ENCODE measurements at regions of chr16 and their contacts with region 1.

Region 1: GRCh38 chr16:31142109-31143010 is 6.8 kb upstream of the PRSS8 start:
- DNase-seq: peak; percentile 84
- H3K4me3 ChIP-seq: peak overlapping the region; percentile 57
- CTCF ChIP-seq: peak; percentile 99

Region 2: DNA sequence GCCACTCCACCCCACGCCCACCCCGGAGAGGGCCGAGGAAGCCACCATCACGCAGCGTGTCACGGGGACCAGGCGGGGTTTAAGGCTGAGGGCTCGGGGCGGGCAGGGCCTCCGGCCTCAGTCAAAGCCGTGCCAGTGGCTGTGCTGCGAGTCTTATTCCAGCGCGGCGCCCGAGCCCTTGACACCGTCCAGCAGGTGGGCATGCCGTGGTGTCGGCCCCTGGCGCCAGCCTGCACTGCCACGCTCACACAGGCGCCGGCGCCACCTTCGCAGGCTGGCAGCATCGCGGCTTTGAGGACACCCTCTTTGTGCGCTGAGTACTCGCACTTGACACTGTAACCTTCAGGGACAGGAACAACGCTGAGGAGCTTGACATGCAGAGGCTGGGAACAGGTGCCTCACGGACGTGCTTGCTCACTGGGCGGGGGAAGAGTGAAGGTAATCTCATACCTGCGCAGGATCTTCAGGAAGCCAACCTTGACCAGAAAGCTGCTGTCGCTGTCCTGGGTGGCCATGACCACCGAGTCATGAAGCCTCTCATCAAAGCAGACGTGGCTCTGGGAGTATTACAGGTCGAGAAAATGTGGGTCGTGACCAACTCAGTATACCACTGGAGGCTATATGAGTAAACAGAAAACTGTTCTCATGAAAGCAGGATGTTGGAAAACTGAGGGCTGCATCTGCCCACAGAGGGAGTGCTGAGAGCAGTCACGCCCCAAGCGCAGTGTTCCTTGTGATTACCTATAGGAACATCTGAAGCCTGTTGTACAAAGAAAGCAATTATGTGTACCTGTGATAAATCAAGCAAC is 321.2 kb before region 1 on chr16:
- CTCF ChIA-PET with region 1: no interaction called
- POLR2A ChIA-PET with region 1: no interaction called
- DNase-seq: no peak
- H3K4me3 ChIP-seq: no peak overlapping the region
- CTCF ChIP-seq: no peak

Region 3: DNA sequence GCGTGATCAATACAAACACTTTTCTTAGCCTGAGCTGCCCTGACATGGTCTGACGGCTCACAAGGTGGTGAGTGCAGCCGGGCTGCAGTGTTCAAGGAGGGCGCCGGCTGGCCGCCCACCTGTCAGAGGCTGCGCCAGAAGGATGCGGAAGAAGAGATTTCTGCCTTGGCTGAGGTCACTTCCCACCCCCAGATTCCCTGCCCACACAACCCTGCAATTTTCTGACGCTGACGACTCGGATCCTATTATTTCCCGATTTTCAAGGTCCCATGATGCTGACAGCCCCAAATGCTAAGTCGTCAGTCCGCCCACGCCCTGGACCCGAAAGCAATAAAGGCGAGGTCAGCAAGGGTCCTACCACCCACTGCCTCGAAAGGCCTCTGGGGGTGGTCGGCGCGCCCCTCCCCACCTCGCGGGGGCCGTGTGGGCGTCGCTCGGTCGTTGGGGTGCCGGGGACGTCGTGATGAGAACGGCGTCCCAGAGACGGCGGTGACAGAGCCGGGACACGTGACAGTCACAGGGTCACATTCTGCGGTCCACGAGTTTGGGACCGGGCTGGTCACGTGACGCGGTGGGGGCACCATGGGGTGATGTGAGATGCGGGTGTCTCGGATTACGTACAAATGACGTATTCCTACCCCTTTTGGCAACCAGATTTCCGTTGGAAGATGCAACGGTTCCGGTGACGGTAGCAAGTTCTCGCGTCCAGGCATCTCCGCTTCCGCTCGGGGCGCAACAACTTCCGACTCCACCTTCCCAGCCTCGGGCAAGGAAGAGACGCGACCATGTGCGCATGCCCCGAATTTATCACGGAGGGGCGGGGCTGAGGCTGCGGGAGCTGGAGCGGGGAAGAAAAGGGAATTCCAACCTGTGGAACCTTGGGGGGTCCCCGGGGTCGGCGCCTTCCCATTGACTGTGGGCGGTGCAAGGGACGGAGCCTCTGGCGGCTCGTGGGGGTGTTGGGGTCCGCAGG is 109.3 kb before region 1 on chr16 and contains the start of gene STX4:
- CTCF ChIA-PET with region 1: interaction called, 12 read pairs
- POLR2A ChIA-PET with region 1: no interaction called
- DNase-seq: peak; percentile 77
- H3K4me3 ChIP-seq: peak within 1 kb of the TSS; percentile 99
- CTCF ChIP-seq: no peak

Region 4: GRCh38 chr16:31050280-31051030 is 91.9 kb before region 1 on chr16:
- CTCF ChIA-PET with region 1: no interaction called
- POLR2A ChIA-PET with region 1: no interaction called
- DNase-seq: no peak
- H3K4me3 ChIP-seq: no peak overlapping the region
- CTCF ChIP-seq: no peak

Region 5: DNA sequence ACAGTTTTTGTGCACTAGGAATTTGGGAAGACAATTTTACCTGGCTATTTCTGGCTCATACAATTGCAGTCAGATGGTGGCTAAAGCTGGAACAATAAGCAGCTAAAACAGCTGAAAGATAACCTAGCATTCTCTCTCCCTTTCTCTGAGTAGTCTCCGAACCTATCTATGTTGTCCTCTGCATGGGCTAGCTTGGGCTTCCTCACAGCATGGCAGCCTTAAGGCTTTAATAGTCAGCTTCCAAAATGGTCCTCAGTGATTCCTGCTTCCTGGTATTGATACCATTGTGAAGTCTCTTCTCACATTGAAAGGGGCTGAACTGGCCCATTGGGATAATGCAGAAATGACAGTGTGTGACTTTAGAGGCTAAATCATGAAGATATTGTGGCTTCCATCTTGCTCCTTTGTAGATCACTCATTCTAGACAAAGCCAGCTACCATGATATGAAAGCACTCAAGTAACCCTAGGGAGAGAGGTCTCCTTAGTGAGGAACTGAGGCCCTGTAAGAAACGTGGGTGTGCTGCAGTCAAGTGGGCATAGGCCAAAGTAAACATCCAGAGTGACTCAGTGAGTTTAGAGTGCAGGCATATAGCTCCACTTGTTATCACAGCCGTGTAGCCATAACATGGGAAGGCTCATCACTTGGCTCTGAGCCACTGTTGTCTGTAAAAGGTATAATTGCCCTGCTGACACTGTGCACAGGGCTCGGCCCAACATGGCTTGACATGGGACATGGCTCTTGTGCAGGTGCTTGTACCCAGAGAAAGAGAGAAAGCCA is 42.3 kb before region 1 on chr16:
- CTCF ChIA-PET with region 1: interaction called, 12 read pairs
- POLR2A ChIA-PET with region 1: no interaction called
- DNase-seq: no peak
- H3K4me3 ChIP-seq: no peak overlapping the region
- CTCF ChIP-seq: no peak

Region 6: DNA sequence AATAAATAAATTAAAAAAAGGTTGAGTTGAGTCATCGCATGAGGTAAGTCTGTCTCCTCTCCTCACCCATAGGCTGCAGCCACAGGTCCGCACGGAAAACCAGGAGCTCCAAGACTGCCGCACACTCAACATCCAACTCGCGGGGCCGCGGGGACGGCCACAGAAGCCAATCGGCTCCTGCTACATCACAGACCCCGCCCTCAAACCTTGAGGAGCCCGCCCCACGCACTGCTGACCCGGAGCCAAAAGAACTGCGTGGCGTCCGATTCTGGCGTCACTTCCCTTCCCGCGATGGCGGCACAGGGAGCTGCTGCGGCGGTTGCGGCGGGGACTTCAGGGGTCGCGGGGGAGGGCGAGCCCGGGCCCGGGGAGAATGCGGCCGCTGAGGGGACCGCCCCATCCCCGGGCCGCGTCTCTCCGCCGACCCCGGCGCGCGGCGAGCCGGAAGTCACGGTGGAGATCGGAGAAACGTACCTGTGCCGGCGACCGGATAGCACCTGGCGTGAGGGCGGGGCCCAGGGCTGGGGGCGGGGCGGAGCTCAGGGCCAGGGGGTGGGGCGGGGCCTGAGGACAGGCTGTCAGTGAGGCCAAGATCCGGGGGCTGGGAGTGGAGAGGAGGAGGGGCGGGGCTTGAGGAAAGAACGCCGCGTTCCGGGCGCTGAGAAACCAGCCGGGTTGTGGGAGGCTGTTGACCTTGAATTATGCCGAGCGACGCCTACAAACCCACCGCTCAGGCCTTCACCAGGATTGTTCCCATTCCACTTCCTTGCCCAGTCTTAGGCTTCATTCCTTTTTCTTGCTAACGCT is 24.8 kb before region 1 on chr16 and contains the start of gene KAT8:
- CTCF ChIA-PET with region 1: interaction called, 56 read pairs
- POLR2A ChIA-PET with region 1: interaction called, 9 read pairs
- DNase-seq: peak; percentile 81
- H3K4me3 ChIP-seq: peak within 1 kb of the TSS; percentile 60
- CTCF ChIP-seq: no peak

Region 7: DNA sequence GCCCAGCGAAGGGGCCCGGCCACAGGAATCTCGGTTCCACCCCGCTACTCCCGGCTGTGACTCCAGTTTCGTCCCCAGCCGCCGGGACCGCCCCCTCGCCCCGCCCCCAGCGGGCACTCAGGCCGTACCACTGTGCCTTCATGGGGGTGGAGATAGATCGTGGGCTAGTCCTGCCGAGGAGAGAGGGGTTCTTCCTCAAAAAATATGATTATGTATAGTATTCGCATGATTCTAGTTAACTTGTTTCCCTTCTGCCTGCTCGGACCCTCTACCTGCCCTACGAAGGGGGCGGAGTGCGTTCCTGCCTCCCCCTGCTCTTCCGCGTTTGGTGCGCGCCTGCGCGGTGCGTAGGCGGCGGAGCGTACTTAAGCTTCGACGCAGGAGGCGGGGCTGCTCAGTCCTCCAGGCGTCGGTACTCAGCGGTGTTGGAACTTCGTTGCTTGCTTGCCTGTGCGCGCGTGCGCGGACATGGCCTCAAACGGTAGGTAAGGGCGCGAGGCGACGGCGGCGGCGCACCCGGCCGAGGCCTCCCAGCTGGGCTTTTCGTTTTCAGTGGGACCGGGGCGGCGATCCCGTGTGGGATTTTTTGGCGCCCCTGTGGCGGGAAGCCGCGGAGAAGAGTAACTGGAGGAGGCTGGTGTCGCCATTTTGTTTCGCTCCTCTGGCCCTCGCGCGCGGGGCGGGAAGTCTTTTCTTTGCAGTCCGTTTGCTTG is 37.5 kb after region 1 on chr16 and contains the start of gene FUS:
- CTCF ChIA-PET with region 1: interaction called, 22 read pairs
- POLR2A ChIA-PET with region 1: interaction called, 31 read pairs
- DNase-seq: peak; percentile 47
- H3K4me3 ChIP-seq: peak within 1 kb of the TSS; percentile 95
- CTCF ChIP-seq: no peak

Region 8: GRCh38 chr16:31223044-31223443 is 80.7 kb after region 1 on chr16:
- CTCF ChIA-PET with region 1: no interaction called
- POLR2A ChIA-PET with region 1: no interaction called
- DNase-seq: no peak
- H3K4me3 ChIP-seq: no peak overlapping the region
- CTCF ChIP-seq: no peak

Region 9: GRCh38 chr16:31301708-31302400 is 159.5 kb after region 1 on chr16:
- CTCF ChIA-PET with region 1: no interaction called
- POLR2A ChIA-PET with region 1: no interaction called
- DNase-seq: no peak
- H3K4me3 ChIP-seq: no peak overlapping the region
- CTCF ChIP-seq: no peak

Measured in AG04449 (cell line).